ENCODE measurements at regions of chr19 and their contacts with region 1.

Region 1: GRCh38 chr19:18328340-18329034 is 5.6 kb upstream of the LSM4 start:
- DNase-seq: peak; percentile 91
- ATAC-seq: peak; percentile 99
- H3K4me3 Mint-ChIP-seq: peak overlapping the region; percentile 70
- H3K27ac Mint-ChIP-seq: peak overlapping the region; percentile 89
- H3K4me1 Mint-ChIP-seq: peaks cover 19% of the 10 kb centered on the region
- H3K27me3 Mint-ChIP-seq: no peaks in the 10 kb centered on the region; the same call in none of the 2 replicates
- CTCF ChIP-seq: peak; percentile 86

Region 2: DNA sequence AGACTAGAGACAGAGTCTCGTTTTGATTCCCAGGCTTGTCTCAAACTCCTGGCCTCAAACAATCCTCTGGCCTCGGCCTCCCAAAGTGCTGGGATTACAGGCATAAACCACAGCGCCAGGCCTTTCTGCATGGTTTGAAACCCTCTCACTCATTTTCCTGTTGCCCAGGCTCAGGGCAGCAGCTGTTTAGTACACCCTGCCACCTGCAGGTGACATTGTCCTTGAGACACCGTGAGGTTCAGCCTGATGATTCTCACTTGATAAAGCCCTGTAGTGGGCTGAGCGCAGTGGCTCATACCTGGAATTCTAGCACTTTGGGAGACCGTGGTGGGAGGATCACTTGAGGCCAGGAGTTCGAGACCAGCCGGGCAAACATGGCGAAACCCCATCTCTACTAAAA is 254.3 kb before region 1 on chr19:
- CTCF ChIA-PET with region 1: no interaction called
- POLR2A ChIA-PET with region 1: no interaction called
- DNase-seq: no peak
- ATAC-seq: no peak
- H3K4me3 Mint-ChIP-seq: no peak overlapping the region
- H3K27ac Mint-ChIP-seq: no peak overlapping the region; the same call in 1 of the 2 replicates
- H3K4me1 Mint-ChIP-seq: no peaks in the 10 kb centered on the region
- H3K27me3 Mint-ChIP-seq: no peaks in the 10 kb centered on the region
- CTCF ChIP-seq: no peak

Region 3: DNA sequence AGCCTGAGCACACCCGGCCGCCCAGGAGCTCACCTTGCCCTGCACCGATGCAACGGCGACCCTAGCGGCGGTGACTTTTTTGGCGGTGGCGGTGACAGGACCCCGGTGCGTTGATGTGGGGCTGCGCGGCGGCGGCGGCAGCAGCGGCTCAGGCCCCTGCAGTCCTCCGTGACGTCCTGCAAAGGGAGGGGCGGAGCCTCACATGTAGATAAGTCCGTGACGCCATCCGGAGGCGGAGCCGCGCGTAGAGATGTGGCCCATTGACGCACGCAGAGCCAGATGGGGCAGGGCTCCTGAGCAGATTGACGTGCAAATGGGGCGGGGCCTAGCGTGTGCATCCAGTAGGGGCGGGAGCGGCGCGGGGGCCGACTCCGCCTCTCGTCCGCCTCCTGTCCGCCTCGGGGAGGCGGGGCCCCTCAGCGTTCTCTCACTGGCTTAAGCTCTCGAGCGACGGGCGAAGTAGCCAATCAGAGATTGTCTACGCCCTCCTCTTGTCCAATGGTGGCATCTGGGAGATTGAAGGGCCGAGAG is 124.6 kb before region 1 on chr19 and contains the start of gene RAB3A:
- CTCF ChIA-PET with region 1: interaction called, 22 read pairs
- POLR2A ChIA-PET with region 1: no interaction called
- DNase-seq: peak; percentile 100
- ATAC-seq: peak; percentile 91
- H3K4me3 Mint-ChIP-seq: peak within 1 kb of the TSS; percentile 95
- H3K27ac Mint-ChIP-seq: peak within 1 kb of the TSS; percentile 99
- H3K4me1 Mint-ChIP-seq: peaks cover 22% of the 10 kb centered on the region
- H3K27me3 Mint-ChIP-seq: no peaks in the 10 kb centered on the region
- CTCF ChIP-seq: no peak
- total RNA-seq, gene RAB3A: 12.2 to 14.7 TPM (median 14.6 TPM) in 3 replicates

Region 4: GRCh38 chr19:18233224-18233825 is 95.2 kb before region 1 on chr19:
- CTCF ChIA-PET with region 1: interaction called, 15 read pairs
- POLR2A ChIA-PET with region 1: no interaction called
- DNase-seq: peak; percentile 93
- ATAC-seq: peak; percentile 79
- H3K4me3 Mint-ChIP-seq: peak overlapping the region; percentile 78
- H3K27ac Mint-ChIP-seq: no peak overlapping the region
- H3K4me1 Mint-ChIP-seq: peaks cover 31% of the 10 kb centered on the region
- H3K27me3 Mint-ChIP-seq: peaks cover 12% of the 10 kb centered on the region
- CTCF ChIP-seq: no peak

Region 5: DNA sequence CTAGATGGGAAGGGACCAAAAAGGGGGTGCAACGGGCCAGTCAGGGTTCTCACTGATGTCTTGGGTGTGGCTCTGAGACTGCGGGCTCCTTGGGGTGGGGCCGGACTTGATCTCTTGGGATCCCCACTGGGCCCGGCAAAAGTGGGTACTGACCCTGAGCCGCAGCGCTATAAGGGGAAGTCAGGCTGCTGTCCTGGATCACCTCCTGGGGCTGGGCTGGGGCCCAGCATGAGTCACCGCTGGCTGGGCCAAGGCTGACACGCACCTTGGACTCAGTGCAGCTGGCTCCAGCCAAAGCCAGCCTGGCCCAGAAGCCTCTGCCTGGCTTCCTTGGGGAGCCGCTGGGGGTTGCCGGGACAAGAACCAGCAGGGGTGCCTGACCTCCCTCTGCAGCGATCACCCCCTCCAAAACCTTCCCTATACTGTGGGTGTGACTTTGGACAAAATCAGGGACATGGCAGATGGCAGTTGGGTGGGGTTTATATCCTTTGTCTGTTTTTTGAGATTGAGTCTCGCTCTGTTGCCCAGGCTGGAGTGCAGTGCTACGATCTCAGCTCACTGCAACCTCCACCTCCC is 53.6 kb before region 1 on chr19:
- CTCF ChIA-PET with region 1: interaction called, 190 read pairs
- POLR2A ChIA-PET with region 1: interaction called, 51 read pairs
- DNase-seq: no peak
- ATAC-seq: no peak
- H3K4me3 Mint-ChIP-seq: no peak overlapping the region
- H3K27ac Mint-ChIP-seq: peak overlapping the region; percentile 53; the same call in 1 of the 2 replicates
- H3K4me1 Mint-ChIP-seq: peaks cover 19% of the 10 kb centered on the region
- H3K27me3 Mint-ChIP-seq: peaks cover 11% of the 10 kb centered on the region
- CTCF ChIP-seq: no peak

Region 6: GRCh38 chr19:18340190-18340989 is 11.9 kb after region 1 on chr19 and contains the start of gene PGPEP1:
- CTCF ChIA-PET with region 1: interaction called, 76 read pairs
- POLR2A ChIA-PET with region 1: interaction called, 5 read pairs
- DNase-seq: peak; percentile 81
- ATAC-seq: peak; percentile 44
- H3K4me3 Mint-ChIP-seq: peak within 1 kb of the TSS; percentile 79
- H3K27ac Mint-ChIP-seq: peak within 1 kb of the TSS; percentile 96; the same call in 1 of the 2 replicates
- H3K4me1 Mint-ChIP-seq: peaks cover 43% of the 10 kb centered on the region
- H3K27me3 Mint-ChIP-seq: no peaks in the 10 kb centered on the region
- CTCF ChIP-seq: no peak
- total RNA-seq, gene PGPEP1: 39.2 to 68.1 TPM (median 40.8 TPM) in 3 replicates

Region 7: GRCh38 chr19:18388100-18388959 is 59.8 kb after region 1 on chr19:
- CTCF ChIA-PET with region 1: interaction called, 27 read pairs
- POLR2A ChIA-PET with region 1: interaction called, 4 read pairs
- DNase-seq: peak; percentile 90
- ATAC-seq: peak; percentile 69
- H3K4me3 Mint-ChIP-seq: peak overlapping the region; percentile 73
- H3K27ac Mint-ChIP-seq: no peak overlapping the region
- H3K4me1 Mint-ChIP-seq: peaks cover 29% of the 10 kb centered on the region
- H3K27me3 Mint-ChIP-seq: peaks cover 32% of the 10 kb centered on the region
- CTCF ChIP-seq: peak; percentile 100

Region 8: GRCh38 chr19:18419195-18419698 is 90.8 kb after region 1 on chr19 and contains the start of gene SSBP4:
- CTCF ChIA-PET with region 1: interaction called, 30 read pairs
- POLR2A ChIA-PET with region 1: interaction called, 3 read pairs
- DNase-seq: peak; percentile 69
- ATAC-seq: peak; percentile 5; the same call in 1 of the 2 replicates
- H3K4me3 Mint-ChIP-seq: peak within 1 kb of the TSS; percentile 72
- H3K27ac Mint-ChIP-seq: no peak within 1 kb of the TSS
- H3K4me1 Mint-ChIP-seq: peaks cover 30% of the 10 kb centered on the region
- H3K27me3 Mint-ChIP-seq: peaks cover 32% of the 10 kb centered on the region
- CTCF ChIP-seq: no peak
- total RNA-seq, gene SSBP4: 44.5 to 51.2 TPM (median 47.4 TPM) in 3 replicates

Measured in WTC11 (cell line).